ENCODE measurements at regions of chr16 and their contacts with region 1.

Region 1: DNA sequence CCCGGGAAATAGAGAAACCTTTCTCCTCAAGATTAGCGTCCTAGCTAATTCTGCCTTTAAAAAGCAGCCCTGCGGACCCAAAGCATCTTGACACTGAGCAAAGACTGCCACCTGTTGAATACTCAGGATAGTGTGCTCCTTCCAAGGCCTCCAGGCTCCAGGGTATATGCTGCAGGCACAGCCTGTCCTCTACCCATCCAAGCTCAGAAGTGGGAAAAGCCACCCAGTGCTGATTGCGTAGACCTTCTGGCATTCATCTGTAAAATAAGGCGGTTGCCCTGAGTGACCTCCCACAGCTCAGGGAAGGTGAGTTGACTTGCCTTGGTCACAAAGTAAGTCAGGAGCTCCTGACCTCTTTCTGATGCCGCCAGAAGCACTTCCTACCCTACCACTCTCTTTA is 456.1 kb upstream of the DYNLRB2 start:
- DNase-seq: peak; percentile 24 to 56 (median 50)
- ATAC-seq: peak; percentile 95
- H3K4me3 ChIP-seq: no peak overlapping the region
- H3K27ac ChIP-seq: no peak overlapping the region
- H3K4me1 ChIP-seq: no peaks in the 10 kb centered on the region
- H3K27me3 ChIP-seq: no peaks in the 10 kb centered on the region

Region 2: DNA sequence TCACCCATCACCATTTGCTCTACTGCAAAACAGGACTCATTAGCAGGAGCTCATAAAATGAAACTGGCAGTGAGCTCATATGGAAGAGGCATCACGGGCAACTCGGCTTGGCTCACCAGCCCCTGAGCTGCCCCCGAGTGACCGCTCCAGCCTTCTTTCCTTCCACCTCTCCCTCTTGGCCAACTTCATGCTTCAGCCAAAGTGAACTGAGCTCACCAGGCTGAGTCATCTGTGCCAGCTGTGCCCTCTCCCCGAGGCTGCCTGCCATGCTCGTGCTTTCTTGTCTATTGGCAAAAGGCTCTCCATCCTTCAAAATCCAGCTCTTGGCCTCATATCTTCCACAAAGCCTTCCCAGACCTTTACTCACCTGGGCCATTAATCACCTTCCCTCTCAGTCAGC is 1593.8 kb before region 1 on chr16:
- intact Hi-C with region 1: loop called in 1 of 4 experiments (anchors 10 kb)
- DNase-seq: no peak
- ATAC-seq: no peak
- H3K4me3 ChIP-seq: no peak overlapping the region
- H3K27ac ChIP-seq: no peak overlapping the region
- H3K4me1 ChIP-seq: peaks cover 2% of the 10 kb centered on the region
- H3K27me3 ChIP-seq: no peaks in the 10 kb centered on the region

Measured in right cardiac atrium (tissue), 5 donors.